Activated naive CD4-positive, alpha-beta T cell treated with anti-CD3 and anti-CD28 coated beads for 36 hours (primary cell): ENCODE measurements at regions of chr10 and their contacts with region 1.

Region 1: DNA sequence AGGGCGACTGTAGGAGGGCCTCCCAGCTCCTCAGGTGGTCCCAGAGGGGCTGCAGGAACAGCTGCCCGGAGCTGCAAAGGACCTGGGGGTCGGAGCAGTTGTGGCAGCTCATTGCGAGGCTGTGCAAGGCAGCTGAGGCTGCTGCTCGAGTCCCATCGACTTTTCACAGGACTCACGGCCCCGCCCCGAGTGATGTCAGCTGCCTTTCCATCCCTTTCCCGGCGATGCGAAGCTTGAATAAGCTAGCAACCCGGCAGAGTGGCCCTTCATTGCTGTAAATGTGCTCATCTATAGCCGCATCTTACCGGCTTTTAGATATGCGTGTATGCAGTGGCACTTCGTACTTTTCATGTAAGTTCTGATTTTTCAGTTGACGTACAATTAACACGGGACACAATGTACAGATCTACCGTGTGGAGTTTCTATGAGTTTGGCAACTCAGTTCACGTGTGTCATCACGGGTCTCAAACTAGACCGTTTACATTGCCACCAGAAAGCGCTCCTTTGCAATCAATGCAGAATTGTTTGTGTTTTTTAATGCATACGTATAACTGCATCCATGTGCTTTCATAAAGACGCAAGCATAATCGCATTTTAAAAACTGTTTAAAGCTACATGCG is at the start of gene CH25H:
- DNase-seq: peak; percentile 79
- H3K4me3 Mint-ChIP-seq: peak within 1 kb of the TSS; percentile 75
- H3K27ac Mint-ChIP-seq: no peak within 1 kb of the TSS
- H3K4me1 Mint-ChIP-seq: peaks cover 7% of the 10 kb centered on the region
- H3K27me3 Mint-ChIP-seq: peaks cover 39% of the 10 kb centered on the region
- total RNA-seq, gene CH25H: 0.12 to 0.22 TPM

Region 2: DNA sequence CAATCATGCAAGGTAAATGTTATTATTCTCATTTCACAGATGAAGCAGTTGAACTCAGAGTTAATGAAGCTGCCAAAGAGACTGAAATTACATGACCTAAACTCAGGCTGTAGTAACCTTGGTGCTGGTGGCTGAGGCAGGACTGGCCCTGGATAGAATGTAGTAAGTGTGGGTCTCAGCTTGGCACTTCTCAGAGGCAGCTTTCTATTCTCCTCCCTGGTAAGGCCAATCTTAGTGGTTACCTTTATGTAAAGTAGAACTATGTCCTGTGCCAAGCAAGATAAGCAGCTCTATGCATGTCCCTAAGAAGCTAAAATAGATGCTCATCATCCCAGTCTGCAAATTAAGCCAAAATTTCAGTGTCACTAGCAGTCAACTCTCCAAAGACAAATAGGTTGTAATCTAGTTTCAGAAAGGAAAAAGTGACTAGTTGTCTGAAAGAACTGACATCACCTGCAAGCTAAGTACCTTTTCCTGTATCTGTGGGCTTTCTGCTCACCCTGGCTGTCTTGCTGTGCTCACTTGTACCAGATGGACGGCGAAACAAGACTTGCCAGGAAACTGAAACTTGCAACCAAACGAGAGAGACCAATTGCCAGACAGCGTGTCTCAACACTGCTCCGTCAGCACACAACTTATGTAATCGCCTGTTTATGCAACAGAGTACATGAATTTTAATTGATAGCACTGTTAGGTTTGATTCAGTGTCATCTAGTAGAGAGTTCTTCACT is 43.9 kb before region 1 on chr10:
- CTCF ChIA-PET with region 1: interaction called, 5 read pairs
- intact Hi-C with region 1: loop called (anchors 1 kb)
- DNase-seq: peak; percentile 69
- H3K4me3 Mint-ChIP-seq: peak overlapping the region; percentile 33
- H3K27ac Mint-ChIP-seq: peak overlapping the region; percentile 5
- H3K4me1 Mint-ChIP-seq: peaks cover 36% of the 10 kb centered on the region
- H3K27me3 Mint-ChIP-seq: peaks cover 7% of the 10 kb centered on the region

Region 3: DNA sequence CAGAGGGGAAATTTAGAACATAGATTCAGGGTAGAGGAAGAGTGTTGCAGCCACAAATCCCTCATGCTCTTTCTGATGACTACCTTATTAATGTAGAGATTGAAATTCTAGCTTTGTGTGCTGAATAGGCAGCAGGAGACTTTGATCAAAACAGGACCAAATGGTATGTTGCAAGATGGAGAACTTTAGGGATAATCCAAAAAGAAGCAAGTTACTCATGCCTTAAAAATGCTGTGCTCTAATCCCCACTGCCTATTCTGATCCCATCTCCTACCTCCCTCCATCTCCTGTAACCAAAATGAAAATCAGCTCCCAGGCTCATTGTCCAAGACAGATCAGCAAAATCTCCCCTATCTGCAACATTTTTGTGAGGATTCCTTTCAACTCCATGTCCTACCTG is 31.5 kb before region 1 on chr10:
- CTCF ChIA-PET with region 1: no interaction called
- intact Hi-C with region 1: no loop called
- DNase-seq: no peak
- H3K4me3 Mint-ChIP-seq: no peak overlapping the region
- H3K27ac Mint-ChIP-seq: no peak overlapping the region
- H3K4me1 Mint-ChIP-seq: peaks cover 4% of the 10 kb centered on the region
- H3K27me3 Mint-ChIP-seq: peaks cover 17% of the 10 kb centered on the region

Region 4: GRCh38 chr10:89274928-89275327 is 67.6 kb after region 1 on chr10:
- CTCF ChIA-PET with region 1: no interaction called
- intact Hi-C with region 1: no loop called
- DNase-seq: no peak
- H3K4me3 Mint-ChIP-seq: no peak overlapping the region
- H3K27ac Mint-ChIP-seq: no peak overlapping the region
- H3K4me1 Mint-ChIP-seq: no peaks in the 10 kb centered on the region
- H3K27me3 Mint-ChIP-seq: no peaks in the 10 kb centered on the region